Activated T-helper 2 cell treated with anti-CD3 and anti-CD28 coated beads, Interferon-gamma antibody, Interleukin-2, Interleukin-4, amounts not matched to agents 10 μg/mL and 5 μg/mL and 100 μg/mL, durations not matched to agents 14 hours and 24 hours and 36 hours (primary cell): ENCODE measurements at regions of chr3 and their contacts with region 1.

Region 1: GRCh38 chr3:10026084-10026890 is at the start of gene FANCD2:
- DNase-seq: peak; percentile 90
- H3K4me3 Mint-ChIP-seq: peak within 1 kb of the TSS; percentile 98
- H3K27ac Mint-ChIP-seq: peak within 1 kb of the TSS; percentile 99
- H3K4me1 Mint-ChIP-seq: peaks cover 25% of the 10 kb centered on the region
- H3K27me3 Mint-ChIP-seq: no peaks in the 10 kb centered on the region
- total RNA-seq, gene FANCD2: 54.4 and 55.1 TPM in 2 replicates

Region 2: GRCh38 chr3:9986237-9986725 is 40.0 kb before region 1 on chr3:
- intact Hi-C with region 1: loop called (anchors 1 kb)
- DNase-seq: no peak
- H3K4me3 Mint-ChIP-seq: peak overlapping the region; percentile 96
- H3K27ac Mint-ChIP-seq: peak overlapping the region; percentile 99
- H3K4me1 Mint-ChIP-seq: peaks cover 18% of the 10 kb centered on the region
- H3K27me3 Mint-ChIP-seq: no peaks in the 10 kb centered on the region

Region 3: DNA sequence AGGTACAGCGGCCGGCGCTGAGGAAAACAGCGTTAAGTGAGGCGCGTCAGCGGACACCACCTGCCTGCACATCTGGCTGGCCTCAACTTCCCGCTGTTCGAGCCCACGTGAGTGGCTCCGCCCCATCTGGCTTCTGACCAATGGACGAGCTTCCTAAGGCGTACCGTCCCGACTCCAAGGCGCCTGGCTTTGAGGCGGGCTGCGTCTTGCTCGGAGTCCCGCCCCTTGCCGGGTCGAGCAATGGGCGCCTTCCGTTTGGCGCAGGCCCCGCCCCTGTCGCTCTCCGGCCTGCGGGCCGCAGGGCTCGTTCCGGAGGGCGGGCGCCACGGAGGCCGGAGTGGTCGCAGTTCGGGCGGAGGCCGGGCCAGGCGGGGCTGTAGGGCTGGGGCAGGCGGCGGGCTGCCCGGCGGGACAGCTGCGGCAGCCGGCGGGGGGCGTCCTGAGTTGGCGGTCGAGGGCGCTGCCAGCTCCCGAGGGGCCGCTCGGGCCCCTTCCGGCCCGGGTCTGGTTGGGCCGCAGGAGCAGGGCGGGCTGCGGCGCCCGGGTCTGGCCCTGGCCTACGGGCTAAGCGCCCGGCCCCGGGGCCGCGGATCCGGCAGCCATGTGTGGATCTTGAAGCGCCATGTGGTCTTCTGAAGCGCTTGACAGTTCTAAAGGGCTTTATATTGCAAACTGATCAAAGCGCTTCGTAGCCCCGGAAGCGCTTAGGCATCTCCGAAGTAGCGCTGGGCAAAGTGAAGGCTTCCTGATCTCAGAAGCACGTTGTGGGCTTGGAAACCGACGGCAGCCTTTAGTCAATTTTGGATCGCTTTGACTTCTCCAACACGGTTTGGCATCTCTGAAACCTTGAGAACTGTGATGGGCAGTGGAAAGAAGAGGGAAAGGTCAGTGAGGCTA is 222.1 kb after region 1 on chr3 and contains the start of gene TATDN2:
- intact Hi-C with region 1: loop called (anchors 1 kb)
- DNase-seq: peak; percentile 94
- H3K4me3 Mint-ChIP-seq: peak within 1 kb of the TSS; percentile 95
- H3K27ac Mint-ChIP-seq: peak within 1 kb of the TSS; percentile 97
- H3K4me1 Mint-ChIP-seq: peaks cover 47% of the 10 kb centered on the region
- H3K27me3 Mint-ChIP-seq: no peaks in the 10 kb centered on the region
- total RNA-seq, gene TATDN2: 64.9 and 65.6 TPM in 2 replicates

Region 4: DNA sequence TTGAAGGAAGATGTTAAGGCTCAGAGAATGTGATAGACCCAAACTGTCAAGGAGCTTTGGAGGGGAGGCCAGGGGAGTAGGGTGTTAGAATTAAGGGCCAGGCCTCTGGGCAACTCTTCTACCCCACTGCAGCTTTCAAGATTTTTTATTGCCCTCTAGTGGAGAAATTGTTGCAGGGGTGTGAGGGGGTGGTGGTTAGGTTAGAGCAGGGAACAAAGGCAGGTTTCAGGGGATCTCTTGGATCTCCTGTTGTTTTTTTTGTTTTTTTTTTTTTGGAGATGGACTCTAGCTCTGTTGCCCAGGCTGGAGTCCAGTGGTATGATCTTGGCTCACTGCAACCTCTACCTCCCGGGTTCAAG is 296.0 kb after region 1 on chr3:
- intact Hi-C with region 1: loop called (anchors 1 kb)
- DNase-seq: no peak
- H3K4me3 Mint-ChIP-seq: no peak overlapping the region
- H3K27ac Mint-ChIP-seq: no peak overlapping the region
- H3K4me1 Mint-ChIP-seq: peaks cover 14% of the 10 kb centered on the region
- H3K27me3 Mint-ChIP-seq: peaks cover 15% of the 10 kb centered on the region